Left ventricle myocardium inferior (tissue), 1 donor: ENCODE measurements at regions of chr2 and their contacts with region 1.

Region 1: DNA sequence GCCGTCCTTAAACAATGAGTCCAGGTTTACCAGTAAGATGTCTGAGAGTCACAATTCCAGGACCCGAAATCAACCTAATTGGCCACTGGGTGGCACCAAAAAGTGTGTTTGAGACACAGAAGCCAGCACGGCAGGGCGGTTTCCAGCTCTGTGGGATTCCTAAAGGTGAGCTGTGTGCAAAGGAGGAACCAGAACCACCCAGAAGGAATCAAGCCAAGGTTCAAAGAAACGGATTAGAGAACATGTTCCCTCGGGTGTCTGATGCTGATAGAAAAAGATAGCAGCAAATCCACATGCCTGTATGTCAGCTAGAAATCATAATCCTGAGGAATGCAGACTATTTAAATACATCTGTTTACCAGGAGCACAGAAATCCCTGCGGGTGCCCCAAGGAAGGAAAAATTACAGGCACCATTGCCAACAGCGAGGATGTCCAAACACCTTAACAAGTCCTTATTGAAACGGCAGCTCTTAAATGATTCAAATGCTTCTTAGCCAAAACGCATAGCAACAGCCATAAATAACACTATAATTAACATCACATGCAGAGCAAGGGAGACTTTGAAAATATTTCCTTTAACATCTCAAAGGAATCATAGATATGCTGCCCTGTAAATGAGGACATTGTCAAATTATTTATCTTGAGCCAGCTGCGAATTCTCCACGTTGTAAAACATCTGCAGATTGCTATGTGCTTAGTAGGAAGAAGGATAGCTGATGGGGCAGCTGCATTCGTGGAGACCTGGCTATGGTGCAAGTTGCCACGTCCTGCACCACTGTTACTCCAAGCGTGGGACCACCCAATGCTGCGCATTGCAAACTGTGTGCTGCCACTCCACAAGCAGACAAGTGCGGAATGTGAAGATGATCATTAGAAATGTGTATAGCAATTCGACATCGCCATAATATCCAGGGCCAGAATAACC is 318.7 kb upstream of the NCKAP5 start:
- DNase-seq: peak; percentile 70
- H3K4me3 ChIP-seq: no peak overlapping the region
- H3K27ac ChIP-seq: no peak overlapping the region
- H3K4me1 ChIP-seq: peaks cover 6% of the 10 kb centered on the region
- H3K27me3 ChIP-seq: peaks cover 13% of the 10 kb centered on the region
- CTCF ChIP-seq: peak; percentile 73

Region 2: GRCh38 chr2:133841900-133842299 is 45.1 kb before region 1 on chr2:
- intact Hi-C with region 1: no loop called
- DNase-seq: no peak
- H3K4me3 ChIP-seq: no peak overlapping the region
- H3K27ac ChIP-seq: peak overlapping the region; percentile 60
- H3K4me1 ChIP-seq: peaks cover 17% of the 10 kb centered on the region
- H3K27me3 ChIP-seq: no peaks in the 10 kb centered on the region
- CTCF ChIP-seq: no peak

Region 3: GRCh38 chr2:134109725-134110124 is 222.7 kb after region 1 on chr2:
- intact Hi-C with region 1: loop called (anchors 5 kb)
- DNase-seq: no peak
- H3K4me3 ChIP-seq: no peak overlapping the region
- H3K27ac ChIP-seq: no peak overlapping the region
- H3K4me1 ChIP-seq: no peaks in the 10 kb centered on the region
- H3K27me3 ChIP-seq: no peaks in the 10 kb centered on the region
- CTCF ChIP-seq: no peak

Region 4: DNA sequence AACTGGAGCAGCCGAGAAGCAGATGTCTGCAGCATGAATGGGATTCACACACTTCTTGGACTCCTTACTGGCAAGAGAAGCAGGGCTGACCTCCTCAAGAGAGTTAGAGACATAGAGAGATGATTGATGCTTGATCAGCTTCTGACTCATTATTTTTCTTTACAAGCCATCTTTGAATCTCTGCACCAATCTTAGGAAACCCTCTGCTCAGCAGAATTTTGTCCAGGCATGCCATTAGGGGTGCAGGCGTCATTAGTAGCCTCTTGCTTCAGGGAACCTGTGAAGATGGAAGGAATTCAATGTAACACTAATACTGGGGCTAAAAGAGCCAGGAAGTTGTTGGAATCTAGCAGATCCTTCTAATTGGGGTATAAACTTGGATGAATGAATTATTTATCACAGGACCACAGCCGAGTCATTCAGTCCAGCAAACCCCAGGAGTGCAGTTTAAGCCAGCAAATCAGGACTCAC is 518.6 kb after region 1 on chr2:
- intact Hi-C with region 1: loop called (anchors 5 kb)
- DNase-seq: no peak
- H3K4me3 ChIP-seq: no peak overlapping the region
- H3K27ac ChIP-seq: no peak overlapping the region
- H3K4me1 ChIP-seq: peaks cover 84% of the 10 kb centered on the region
- H3K27me3 ChIP-seq: no peaks in the 10 kb centered on the region
- CTCF ChIP-seq: no peak

Region 5: GRCh38 chr2:134446383-134447017 is 559.5 kb after region 1 on chr2:
- intact Hi-C with region 1: loop called (anchors 5 kb)
- DNase-seq: no peak
- H3K4me3 ChIP-seq: no peak overlapping the region
- H3K27ac ChIP-seq: no peak overlapping the region
- H3K4me1 ChIP-seq: peaks cover 42% of the 10 kb centered on the region
- H3K27me3 ChIP-seq: no peaks in the 10 kb centered on the region
- CTCF ChIP-seq: no peak